ENCODE measurements at regions of chr6 and their contacts with region 1.

Region 1: DNA sequence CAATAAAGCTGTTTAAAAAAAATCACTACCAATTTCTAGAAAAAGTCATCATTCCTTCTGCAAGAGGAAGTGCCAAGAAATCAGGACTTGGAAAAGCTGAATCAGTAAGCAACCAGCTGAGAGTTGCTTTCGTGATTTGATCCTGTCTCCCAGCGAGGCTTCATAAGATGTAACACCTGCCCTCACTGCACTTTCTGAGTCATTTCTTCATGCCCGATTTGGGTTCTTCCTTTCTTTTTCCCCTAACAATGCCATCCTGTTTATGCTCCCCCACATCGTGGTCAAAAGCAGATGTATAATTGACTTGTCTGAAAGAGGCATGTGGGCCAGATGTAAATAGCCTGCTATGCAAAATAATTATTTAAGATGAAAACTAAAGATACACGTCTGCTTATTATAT is 52.1 kb downstream of the RIPOR2 start:
- DNase-seq: peak in 2 of 14 experiments; percentile 23 to 41
- ATAC-seq: peak; percentile 47
- H3K4me3 ChIP-seq: no peak overlapping the region
- H3K4me3 Mint-ChIP-seq: peak overlapping the region; percentile 81
- H3K27ac ChIP-seq: peak overlapping the region in 1 of 2 donors; percentile 47
- H3K27ac Mint-ChIP-seq: peak overlapping the region; percentile 97
- H3K4me1 ChIP-seq: peaks cover 54% of the 10 kb centered on the region
- H3K4me1 Mint-ChIP-seq: peaks cover 94% of the 10 kb centered on the region
- H3K27me3 ChIP-seq: no peaks in the 10 kb centered on the region
- H3K27me3 Mint-ChIP-seq: no peaks in the 10 kb centered on the region
- CTCF ChIP-seq: no peak

Region 2: GRCh38 chr6:24861934-24862333 is 21.7 kb before region 1 on chr6:
- CTCF ChIA-PET with region 1: interaction called, 11 read pairs
- POLR2A ChIA-PET with region 1: interaction called, 4 read pairs
- intact Hi-C with region 1: no loop called
- DNase-seq: no peak
- ATAC-seq: no peak
- H3K4me3 ChIP-seq: no peak overlapping the region
- H3K4me3 Mint-ChIP-seq: no peak overlapping the region
- H3K27ac ChIP-seq: peak overlapping the region; percentile 39 to 78
- H3K27ac Mint-ChIP-seq: peak overlapping the region; percentile 93
- H3K4me1 ChIP-seq: peaks cover 77% of the 10 kb centered on the region
- H3K4me1 Mint-ChIP-seq: peaks cover 98% of the 10 kb centered on the region
- H3K27me3 ChIP-seq: no peaks in the 10 kb centered on the region
- H3K27me3 Mint-ChIP-seq: no peaks in the 10 kb centered on the region
- CTCF ChIP-seq: no peak